ENCODE measurements at regions of chr15 and their contacts with region 1.

Region 1: GRCh38 chr15:63157118-63157843 is at the start of gene RPS27L:
- DNase-seq: peak; percentile 100
- H3K4me3 ChIP-seq: peak within 1 kb of the TSS; percentile 89
- H3K4me1 ChIP-seq: peaks cover 9% of the 10 kb centered on the region
- H3K27me3 ChIP-seq: no peaks in the 10 kb centered on the region

Region 2: GRCh38 chr15:63048115-63048775 is 109.0 kb before region 1 on chr15:
- in situ Hi-C with region 1: no loop called
- DNase-seq: peak; percentile 97 to 100
- H3K4me3 ChIP-seq: peak overlapping the region; percentile 65
- H3K4me1 ChIP-seq: peaks cover 78% of the 10 kb centered on the region
- H3K27me3 ChIP-seq: no peaks in the 10 kb centered on the region

Region 3: DNA sequence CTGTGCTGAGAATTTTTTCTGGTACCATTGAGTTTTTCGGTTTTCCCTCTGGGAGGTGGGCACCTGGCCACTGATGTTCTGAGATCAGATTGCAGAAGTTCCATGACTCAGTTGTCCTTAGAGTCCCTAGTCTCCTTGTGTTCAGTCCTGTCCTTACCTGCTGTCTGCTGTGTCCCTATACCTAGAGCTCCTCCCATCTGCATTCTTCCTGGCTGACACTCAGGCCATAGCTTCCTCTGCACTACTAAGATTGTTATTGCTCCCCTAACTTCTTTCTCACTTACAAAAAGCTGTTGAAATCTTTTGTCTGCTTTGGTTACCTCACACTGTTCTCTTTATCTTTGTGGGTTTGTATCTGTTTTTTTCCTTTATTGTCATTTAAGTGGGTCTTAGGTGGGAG is 360.3 kb after region 1 on chr15:
- in situ Hi-C with region 1: no loop called
- DNase-seq: no peak
- H3K4me3 ChIP-seq: no peak overlapping the region
- H3K4me1 ChIP-seq: peaks cover 26% of the 10 kb centered on the region
- H3K27me3 ChIP-seq: no peaks in the 10 kb centered on the region

Region 4: DNA sequence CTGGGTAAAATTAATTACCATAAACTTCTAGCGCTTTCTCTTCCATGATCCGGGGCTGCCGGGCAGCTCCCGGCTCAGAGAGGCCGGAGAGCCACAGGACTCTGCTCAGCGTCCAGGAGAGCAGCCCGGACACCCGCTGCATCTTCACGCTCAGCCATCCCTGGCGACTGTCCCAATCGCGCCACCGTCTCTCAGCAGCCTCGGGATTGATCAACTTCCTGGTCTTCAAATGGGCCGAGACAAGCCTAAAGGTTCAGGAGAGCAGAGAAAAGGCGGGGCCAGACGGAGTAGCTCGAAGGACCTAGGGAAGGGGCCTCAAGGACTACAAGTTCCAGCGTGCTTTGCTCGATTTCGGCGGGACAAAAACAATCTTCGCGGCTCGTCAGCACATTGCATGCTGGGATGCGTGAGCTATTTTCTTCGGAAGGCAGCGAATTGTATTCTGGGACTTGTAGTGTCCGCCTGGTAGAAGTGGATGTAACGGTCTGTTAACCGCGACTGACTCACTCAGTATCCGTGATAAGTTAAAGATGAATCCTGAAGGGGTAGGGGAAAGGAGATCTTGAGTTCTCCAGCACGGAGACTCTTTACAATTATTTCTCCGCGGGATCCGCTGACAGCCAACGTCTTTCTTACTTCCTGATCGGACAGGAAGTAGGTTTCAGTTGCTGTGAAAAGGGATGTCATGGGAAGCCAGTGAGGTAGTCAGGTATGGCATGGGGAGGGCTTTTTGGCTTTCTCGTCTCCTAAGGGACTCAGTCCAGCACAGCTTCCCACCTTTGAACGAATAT is 936.5 kb after region 1 on chr15 and contains the start of gene CIAO2A:
- in situ Hi-C with region 1: loop called (anchors 25 kb)
- DNase-seq: peak; percentile 100
- H3K4me3 ChIP-seq: peak within 1 kb of the TSS; percentile 64
- H3K4me1 ChIP-seq: peaks cover 33% of the 10 kb centered on the region
- H3K27me3 ChIP-seq: no peaks in the 10 kb centered on the region